Activated CD4-positive, alpha-beta T cell treated with anti-CD3 and anti-CD28 coated beads, Interleukin-2, amount 10 ng/mL, durations not matched to agents 24 days and 14 days (primary cell): ENCODE measurements at regions of chrX and their contacts with region 1.

Region 1: DNA sequence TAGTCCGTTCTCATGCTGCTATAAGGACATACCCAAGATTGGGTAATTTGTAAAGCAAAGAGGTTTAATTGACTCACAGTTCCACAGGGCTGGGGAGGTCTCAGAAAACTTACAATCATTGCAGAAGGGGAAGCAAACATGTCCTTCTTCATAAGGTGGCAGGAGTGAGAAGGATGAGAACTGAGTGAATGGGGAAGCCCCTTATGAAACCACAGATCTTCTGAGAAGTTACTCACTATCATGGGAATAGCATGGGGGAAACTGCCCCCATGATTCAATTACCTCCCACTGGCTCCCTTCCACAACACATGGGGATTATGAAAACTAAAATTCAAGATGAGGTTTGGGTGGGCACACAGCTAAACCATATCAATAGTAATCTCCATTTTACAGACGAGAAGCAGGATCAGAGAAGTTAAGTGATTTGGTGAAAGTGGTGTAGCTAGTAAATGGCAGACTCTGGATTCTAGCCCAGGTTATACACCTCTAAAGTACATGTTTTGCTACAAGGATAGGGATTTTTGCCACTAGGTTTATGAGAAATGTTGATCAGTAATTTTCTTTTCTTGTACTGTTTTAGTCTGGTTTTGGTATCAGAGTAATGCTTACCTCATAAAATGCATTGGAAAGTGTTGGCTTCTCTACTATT is 47.3 kb upstream of the C1GALT1C1 start:
- DNase-seq: no peak
- H3K4me3 Mint-ChIP-seq: no peak overlapping the region
- H3K27ac Mint-ChIP-seq: peak overlapping the region; percentile 75
- H3K4me1 Mint-ChIP-seq: peaks cover 14% of the 10 kb centered on the region
- H3K27me3 Mint-ChIP-seq: no peaks in the 10 kb centered on the region

Region 2: GRCh38 chrX:120334151-120334550 is 343.0 kb before region 1 on chrX:
- intact Hi-C with region 1: no loop called
- DNase-seq: no peak
- H3K4me3 Mint-ChIP-seq: no peak overlapping the region
- H3K27ac Mint-ChIP-seq: no peak overlapping the region
- H3K4me1 Mint-ChIP-seq: no peaks in the 10 kb centered on the region
- H3K27me3 Mint-ChIP-seq: no peaks in the 10 kb centered on the region

Region 3: GRCh38 chrX:120690344-120690743 is 13.2 kb after region 1 on chrX:
- intact Hi-C with region 1: loop called (anchors 1 kb)
- DNase-seq: no peak
- H3K4me3 Mint-ChIP-seq: no peak overlapping the region
- H3K27ac Mint-ChIP-seq: no peak overlapping the region
- H3K4me1 Mint-ChIP-seq: peaks cover 12% of the 10 kb centered on the region
- H3K27me3 Mint-ChIP-seq: no peaks in the 10 kb centered on the region

Region 4: GRCh38 chrX:120736989-120737388 is 59.9 kb after region 1 on chrX:
- intact Hi-C with region 1: no loop called
- DNase-seq: no peak
- H3K4me3 Mint-ChIP-seq: no peak overlapping the region
- H3K27ac Mint-ChIP-seq: peak overlapping the region; percentile 50
- H3K4me1 Mint-ChIP-seq: peaks cover 20% of the 10 kb centered on the region
- H3K27me3 Mint-ChIP-seq: no peaks in the 10 kb centered on the region

Region 5: GRCh38 chrX:120801426-120801825 is 124.3 kb after region 1 on chrX:
- intact Hi-C with region 1: no loop called
- DNase-seq: no peak
- H3K4me3 Mint-ChIP-seq: no peak overlapping the region
- H3K27ac Mint-ChIP-seq: peak overlapping the region; percentile 75
- H3K4me1 Mint-ChIP-seq: peaks cover 28% of the 10 kb centered on the region
- H3K27me3 Mint-ChIP-seq: no peaks in the 10 kb centered on the region

Region 6: GRCh38 chrX:121114691-121115090 is 437.6 kb after region 1 on chrX:
- intact Hi-C with region 1: no loop called
- DNase-seq: no peak
- H3K4me3 Mint-ChIP-seq: no peak overlapping the region
- H3K27ac Mint-ChIP-seq: no peak overlapping the region
- H3K4me1 Mint-ChIP-seq: no peaks in the 10 kb centered on the region
- H3K27me3 Mint-ChIP-seq: no peaks in the 10 kb centered on the region